Panc1 (cell line): ENCODE measurements at regions of chr1 and their contacts with region 1.

Region 1: DNA sequence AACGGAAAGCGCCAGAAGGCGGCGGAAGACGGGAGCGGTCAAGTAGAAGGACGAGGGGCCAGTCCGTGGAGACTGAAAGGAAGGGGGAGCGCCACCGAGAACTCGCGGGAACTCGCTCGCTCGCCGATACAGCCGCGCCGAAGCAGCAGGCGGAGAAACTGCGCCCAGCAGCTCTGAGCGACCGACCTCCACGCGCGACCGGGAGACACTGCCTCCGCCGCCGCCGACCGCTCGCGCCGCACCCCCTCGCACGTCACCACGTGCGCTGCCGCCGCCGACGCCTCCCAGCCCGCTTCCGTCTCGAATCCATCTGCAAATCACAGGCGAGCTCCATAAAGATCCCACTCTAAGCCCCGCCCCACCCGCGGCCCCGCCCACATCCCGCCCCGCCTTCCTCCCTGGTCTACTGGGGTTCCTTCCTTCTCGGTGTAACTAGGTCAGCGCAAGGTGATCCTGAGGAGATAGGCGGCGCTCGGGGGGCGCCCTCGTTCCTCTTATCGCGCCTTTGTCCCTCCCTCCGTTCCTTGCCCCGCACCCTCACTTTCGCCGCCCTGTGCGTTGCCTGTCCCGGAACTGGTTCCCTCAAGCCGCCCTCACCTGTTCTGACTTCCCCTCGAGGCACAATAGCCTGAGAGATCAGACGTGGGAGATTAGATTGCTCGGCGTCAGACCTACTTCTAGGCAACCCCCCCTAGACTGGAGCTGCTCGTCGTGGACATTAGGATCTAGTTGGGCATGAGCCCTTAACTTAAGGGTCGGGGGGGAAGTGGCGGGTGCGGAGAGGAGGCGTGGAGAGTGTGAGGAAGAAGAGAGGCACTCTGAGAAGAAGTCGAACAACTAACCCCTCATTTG is at the start of gene IVNS1ABP:
- DNase-seq: peak; percentile 47
- ATAC-seq: peak; percentile 90
- H3K4me3 ChIP-seq: peak within 1 kb of the TSS; percentile 86 to 97
- H3K27ac ChIP-seq: peak within 1 kb of the TSS; percentile 97
- H3K4me1 ChIP-seq: peaks cover 17% of the 10 kb centered on the region; the same call in 1 of the 2 replicates
- H3K27me3 ChIP-seq: no peaks in the 10 kb centered on the region
- CTCF ChIP-seq: peak; percentile 58
- total RNA-seq, gene IVNS1ABP: 70.2 TPM

Region 2: DNA sequence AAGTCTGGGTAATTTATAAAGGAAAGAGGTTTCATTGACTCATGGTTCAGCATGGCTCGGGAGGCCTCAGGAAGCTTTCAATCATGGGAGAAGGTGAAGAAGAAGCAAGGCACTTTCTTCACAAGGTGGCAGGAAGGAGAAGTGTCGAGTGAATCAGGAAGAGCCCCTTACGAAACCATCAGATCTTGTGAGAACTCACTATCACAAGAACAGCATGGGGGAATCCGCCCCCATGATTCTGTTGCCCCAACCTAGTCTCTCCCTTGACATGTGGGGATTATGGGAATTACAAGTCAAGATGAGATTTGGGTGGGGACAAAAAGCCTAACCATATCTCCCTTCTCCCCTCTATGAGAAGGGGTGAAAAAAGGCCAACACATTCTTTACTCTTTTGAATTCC is 11.0 kb after region 1 on chr1:
- CTCF ChIA-PET with region 1: no interaction called
- POLR2A ChIA-PET with region 1: no interaction called
- in situ Hi-C with region 1: no loop called
- intact Hi-C with region 1: no loop called
- DNase-seq: no peak
- ATAC-seq: no peak
- H3K4me3 ChIP-seq: no peak overlapping the region
- H3K27ac ChIP-seq: no peak overlapping the region
- H3K4me1 ChIP-seq: no peaks in the 10 kb centered on the region
- H3K27me3 ChIP-seq: no peaks in the 10 kb centered on the region
- CTCF ChIP-seq: no peak

Region 3: DNA sequence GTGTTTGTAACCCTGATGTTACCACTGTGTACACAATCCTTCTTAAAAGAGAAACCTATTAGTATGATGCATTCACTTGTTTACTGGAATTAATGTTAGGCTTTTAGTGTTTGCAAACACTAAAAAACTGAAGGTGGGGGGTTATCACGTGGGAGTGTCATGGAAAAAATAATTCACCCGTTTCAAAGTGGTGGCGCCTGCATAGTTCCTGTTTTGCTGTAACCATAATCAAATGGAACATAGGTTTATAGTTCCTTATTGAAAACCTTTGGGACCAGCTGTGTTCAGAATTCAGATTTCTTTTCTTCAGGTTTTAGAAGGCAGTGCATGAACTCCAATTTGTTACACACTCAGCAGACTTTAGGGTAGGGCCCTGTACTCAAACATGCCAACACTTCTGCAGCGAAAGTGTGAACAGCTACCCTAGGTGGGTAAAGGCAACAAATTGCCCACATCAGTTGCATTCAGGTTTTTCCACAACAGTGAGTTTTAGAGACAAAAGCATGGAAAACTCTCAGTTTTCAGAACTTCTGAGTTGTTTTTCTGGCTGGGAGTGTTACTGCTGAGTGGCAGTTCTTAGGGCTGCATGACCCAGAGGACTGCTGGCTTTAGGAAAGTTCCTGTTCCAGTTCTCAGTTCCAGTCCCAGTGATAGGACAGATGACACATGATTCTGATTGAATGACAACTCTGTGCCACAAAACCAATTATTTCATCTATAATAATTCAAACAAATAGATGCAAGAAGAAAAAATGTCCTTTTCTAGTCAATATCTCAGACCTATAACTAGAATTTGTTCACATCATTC is 28.9 kb after region 1 on chr1:
- CTCF ChIA-PET with region 1: no interaction called
- POLR2A ChIA-PET with region 1: interaction called, 12 read pairs
- in situ Hi-C with region 1: no loop called
- intact Hi-C with region 1: no loop called
- DNase-seq: no peak
- ATAC-seq: no peak
- H3K4me3 ChIP-seq: no peak overlapping the region
- H3K27ac ChIP-seq: no peak overlapping the region
- H3K4me1 ChIP-seq: no peaks in the 10 kb centered on the region
- H3K27me3 ChIP-seq: no peaks in the 10 kb centered on the region
- CTCF ChIP-seq: no peak

Region 4: DNA sequence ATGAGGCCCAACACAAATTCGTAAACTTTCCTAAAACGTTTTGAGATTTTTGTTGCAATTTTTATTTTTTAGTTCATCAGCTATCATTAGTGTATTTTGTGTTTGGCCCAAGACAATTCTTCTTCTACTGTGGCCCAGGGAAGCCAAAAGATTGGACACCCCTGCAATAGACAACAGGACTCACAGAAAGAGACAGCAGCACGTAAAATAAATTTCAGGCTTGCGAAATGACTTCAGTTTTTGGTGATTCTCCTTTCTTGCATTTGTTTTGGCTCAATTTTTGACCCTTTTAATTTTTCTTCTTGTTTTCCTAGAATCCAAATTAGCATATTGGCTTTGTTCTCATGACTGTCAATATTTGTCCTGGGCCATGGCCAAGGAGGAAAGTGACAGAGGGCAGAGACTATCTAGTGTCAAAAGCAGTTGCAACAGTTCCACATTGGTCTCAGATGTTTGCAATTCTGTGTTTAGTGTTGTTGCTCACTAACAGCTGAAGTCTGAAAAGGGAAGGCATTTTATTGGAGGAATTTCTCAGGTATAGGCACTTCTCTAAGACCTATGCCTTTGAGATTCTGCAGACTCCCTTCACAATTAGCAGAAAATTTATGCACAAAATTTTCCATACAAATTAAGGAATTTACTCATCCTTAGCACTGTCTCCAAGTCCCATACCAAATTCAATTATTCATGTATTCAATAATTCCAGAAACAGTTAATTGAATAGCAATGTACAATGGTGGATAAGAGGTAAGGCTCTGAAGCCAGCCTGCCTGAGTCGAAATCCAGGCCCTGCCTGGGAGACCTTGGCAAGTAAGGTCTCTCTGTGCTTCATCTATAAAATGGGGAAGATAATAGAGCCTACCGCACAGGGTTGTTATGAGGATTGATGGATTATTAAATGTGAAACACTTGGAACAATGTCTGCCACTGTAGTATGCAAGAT is 160.6 kb after region 1 on chr1:
- CTCF ChIA-PET with region 1: no interaction called
- POLR2A ChIA-PET with region 1: no interaction called
- in situ Hi-C with region 1: no loop called
- intact Hi-C with region 1: loop called (anchors 10 kb)
- DNase-seq: no peak
- ATAC-seq: no peak
- H3K4me3 ChIP-seq: no peak overlapping the region
- H3K27ac ChIP-seq: no peak overlapping the region
- H3K4me1 ChIP-seq: no peaks in the 10 kb centered on the region
- H3K27me3 ChIP-seq: no peaks in the 10 kb centered on the region
- CTCF ChIP-seq: no peak

Region 5: GRCh38 chr1:185595835-185596667 is 278.8 kb after region 1 on chr1:
- CTCF ChIA-PET with region 1: no interaction called
- POLR2A ChIA-PET with region 1: interaction called, 4 read pairs
- in situ Hi-C with region 1: no loop called
- intact Hi-C with region 1: loop called (anchors 10 kb)
- DNase-seq: peak; percentile 27
- ATAC-seq: peak; percentile 84
- H3K4me3 ChIP-seq: no peak overlapping the region
- H3K27ac ChIP-seq: peak overlapping the region; percentile 81
- H3K4me1 ChIP-seq: peaks cover 12% of the 10 kb centered on the region
- H3K27me3 ChIP-seq: no peaks in the 10 kb centered on the region
- CTCF ChIP-seq: peak; percentile 81

Region 6: DNA sequence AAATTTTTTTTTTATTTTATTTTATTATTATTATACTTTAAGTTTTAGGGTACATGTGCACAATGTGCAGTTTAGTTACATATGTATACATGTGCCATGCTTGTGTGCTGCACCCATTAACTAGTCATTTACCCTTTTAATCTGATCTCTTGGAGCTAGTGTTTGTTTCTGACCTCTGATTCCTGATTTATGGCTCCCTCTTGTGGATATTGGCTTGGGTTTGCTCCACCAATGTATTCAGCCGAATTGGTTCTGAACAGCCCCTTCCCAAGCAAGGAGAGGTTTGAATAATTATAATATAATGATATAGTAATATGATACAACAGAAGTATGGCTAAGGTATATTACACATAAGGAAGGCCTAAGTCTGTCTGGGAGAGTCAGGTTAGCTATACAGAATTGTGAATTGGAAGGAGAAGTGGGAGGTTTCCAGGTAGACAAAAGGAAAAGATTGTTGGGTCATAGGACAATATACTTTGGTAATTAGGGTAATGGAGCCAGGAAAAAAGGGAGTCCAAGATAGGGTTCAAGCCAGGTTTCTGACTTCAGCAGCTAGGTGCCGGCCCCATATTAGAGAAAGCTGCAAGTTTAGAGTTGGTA is 363.9 kb after region 1 on chr1:
- CTCF ChIA-PET with region 1: no interaction called
- POLR2A ChIA-PET with region 1: no interaction called
- in situ Hi-C with region 1: no loop called
- intact Hi-C with region 1: loop called (anchors 5 kb)
- DNase-seq: no peak
- ATAC-seq: peak; percentile 89
- H3K4me3 ChIP-seq: no peak overlapping the region
- H3K27ac ChIP-seq: no peak overlapping the region
- H3K4me1 ChIP-seq: no peaks in the 10 kb centered on the region
- H3K27me3 ChIP-seq: no peaks in the 10 kb centered on the region
- CTCF ChIP-seq: peak; percentile 72